GM18951 (cell line): ENCODE measurements at regions of chr22 and their contacts with region 1.

Region 1: GRCh38 chr22:36860821-36861659 is at the start of gene NCF4:
- POLR2A ChIP-seq: peak; percentile 81

Region 2: DNA sequence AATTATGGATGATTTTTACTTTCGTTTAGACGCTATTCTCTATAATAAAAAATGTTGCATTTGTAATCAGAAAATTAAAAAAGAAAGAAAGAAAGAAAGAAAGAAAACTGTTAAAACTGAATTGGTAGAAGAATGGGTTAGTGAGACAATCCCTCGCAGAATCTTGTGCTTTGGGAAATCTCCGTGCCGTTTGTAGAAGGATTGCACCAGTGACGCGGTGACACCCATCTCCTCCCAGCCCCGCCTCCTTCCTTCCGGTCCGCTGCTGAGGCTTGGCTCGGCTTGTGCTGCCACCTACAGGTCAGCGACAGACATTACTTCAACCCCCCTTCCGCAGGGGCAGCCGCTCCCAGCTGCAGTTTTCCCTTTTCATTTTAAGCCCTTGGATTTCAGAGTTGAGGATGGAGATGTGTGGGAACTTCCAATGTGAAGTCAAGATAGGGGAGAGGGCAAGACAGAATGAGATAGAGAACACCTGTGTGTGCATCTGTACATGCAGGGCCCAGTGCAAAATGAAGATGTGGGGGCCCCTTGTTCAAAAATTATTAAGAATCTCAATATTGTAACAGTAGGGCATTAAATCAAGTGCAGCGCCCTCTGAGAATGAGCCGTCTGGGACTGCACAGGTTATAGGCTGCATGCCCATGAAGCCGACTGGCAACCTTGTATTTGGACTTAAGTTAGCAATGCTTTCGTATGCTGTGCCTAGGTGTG is 117.1 kb after region 1 on chr22:
- in situ Hi-C with region 1: loop called (anchors 10 kb)
- POLR2A ChIP-seq: peak; percentile 45